ENCODE measurements at regions of chr7 and their contacts with region 1.

Region 1: DNA sequence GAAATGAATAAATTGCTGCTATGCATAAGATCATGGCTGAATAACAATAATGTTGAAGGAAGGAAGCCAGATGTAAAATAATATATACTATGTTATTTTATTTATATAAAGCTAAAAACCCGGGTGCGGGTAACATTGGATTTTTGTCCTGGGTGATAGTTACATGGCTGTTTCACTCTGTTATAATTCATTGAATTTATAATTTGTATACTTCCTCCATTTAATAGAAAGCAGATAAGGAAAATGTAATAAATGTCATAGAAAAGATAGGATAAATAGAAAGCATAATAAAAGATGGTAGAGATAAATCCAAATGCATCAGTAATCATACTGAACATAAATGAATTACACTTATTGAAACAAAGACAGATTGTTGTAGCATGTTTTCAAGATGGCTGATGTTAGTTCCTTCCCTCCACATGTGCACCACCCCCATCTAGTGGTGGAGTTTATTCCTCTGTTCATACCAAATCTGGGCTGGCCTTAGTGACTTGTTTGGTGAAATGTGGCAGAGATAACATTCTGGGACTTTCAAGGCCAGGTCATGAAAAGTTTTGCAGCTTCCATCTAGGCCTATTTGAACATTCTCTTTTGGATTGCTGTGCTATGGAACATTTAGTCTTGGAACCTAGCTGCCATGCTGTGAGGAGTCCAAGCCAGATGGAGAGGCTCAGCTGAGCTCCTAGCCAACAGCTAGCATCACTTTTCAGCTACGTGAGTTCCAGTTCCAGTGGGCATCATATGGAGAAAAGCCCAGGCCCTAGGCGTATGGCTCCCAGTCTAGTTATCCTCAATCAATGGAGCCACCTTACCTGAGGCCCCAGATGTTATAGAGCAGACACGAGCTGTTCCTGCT is 46.9 kb downstream of the AHCYL2 start:
- DNase-seq: peak; percentile 67
- H3K4me3 ChIP-seq: no peak overlapping the region
- H3K27ac ChIP-seq: no peak overlapping the region
- H3K4me1 ChIP-seq: no peaks in the 10 kb centered on the region
- CTCF ChIP-seq: peak; percentile 91

Region 2: GRCh38 chr7:129224251-129225205 is 47.2 kb before region 1 on chr7 and contains the start of gene AHCYL2:
- CTCF ChIA-PET with region 1: no interaction called
- POLR2A ChIA-PET with region 1: interaction called, 3 read pairs
- intact Hi-C with region 1: loop called (anchors 2 kb)
- DNase-seq: peak; percentile 99
- H3K4me3 ChIP-seq: peak within 1 kb of the TSS; percentile 81
- H3K27ac ChIP-seq: peak within 1 kb of the TSS; percentile 69
- H3K4me1 ChIP-seq: peaks cover 41% of the 10 kb centered on the region
- CTCF ChIP-seq: no peak
- total RNA-seq, gene AHCYL2: 3.6 and 5.0 TPM in 2 replicates